Endothelial cell of umbilical vein (primary cell): ENCODE measurements at regions of chr16 and their contacts with region 1.

Region 1: GRCh38 chr16:81696961-81697615 is 82.0 kb upstream of the PLCG2 start:
- DNase-seq: peak; percentile 79
- H3K4me3 ChIP-seq: no peak overlapping the region
- H3K27ac ChIP-seq: peak overlapping the region; percentile 98
- H3K4me1 ChIP-seq: peaks cover 62% of the 10 kb centered on the region
- H3K27me3 ChIP-seq: no peaks in the 10 kb centered on the region
- CTCF ChIP-seq: peak; percentile 79 to 84
- POLR2A ChIP-seq: no peak

Region 2: DNA sequence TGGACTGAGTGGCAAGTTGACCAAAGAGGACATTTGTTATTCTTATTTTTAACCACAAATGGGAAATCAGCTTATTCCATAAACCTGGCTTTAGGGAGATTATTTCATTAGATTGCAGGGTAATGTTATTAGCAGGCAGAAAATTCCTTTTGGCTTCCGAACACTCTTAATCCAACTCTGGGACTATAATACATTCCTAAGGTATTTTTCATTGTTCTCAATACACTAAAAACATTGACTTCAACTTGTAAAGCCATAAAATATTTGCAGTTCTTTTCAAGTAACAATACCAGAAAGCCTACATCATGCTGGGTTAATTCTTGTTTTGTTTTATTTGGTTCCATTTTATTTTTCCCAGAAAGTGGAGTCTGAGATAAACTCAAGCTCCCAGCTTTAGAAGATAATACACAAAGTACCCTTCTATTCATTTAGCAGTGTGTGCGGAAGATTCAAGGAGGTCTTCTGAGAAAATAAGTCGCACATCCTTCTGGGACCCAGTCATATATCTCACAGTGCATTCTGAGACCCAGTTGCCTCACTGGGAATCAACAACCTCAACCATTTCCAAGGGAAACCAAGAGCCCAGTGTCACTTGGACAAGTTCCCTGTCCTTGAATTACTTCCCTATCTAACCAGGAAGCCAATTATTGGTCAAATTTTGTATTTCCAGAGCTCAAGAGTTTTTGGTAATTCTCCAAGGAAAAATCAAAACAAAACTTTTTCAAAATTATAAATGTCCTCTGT is 1545.9 kb before region 1 on chr16:
- CTCF ChIA-PET with region 1: no interaction called
- POLR2A ChIA-PET with region 1: no interaction called
- dilution Hi-C with region 1: no loop called
- intact Hi-C with region 1: no loop called
- DNase-seq: no peak
- H3K4me3 ChIP-seq: no peak overlapping the region
- H3K27ac ChIP-seq: no peak overlapping the region
- H3K4me1 ChIP-seq: no peaks in the 10 kb centered on the region
- H3K27me3 ChIP-seq: no peaks in the 10 kb centered on the region
- CTCF ChIP-seq: no peak
- POLR2A ChIP-seq: no peak

Region 3: DNA sequence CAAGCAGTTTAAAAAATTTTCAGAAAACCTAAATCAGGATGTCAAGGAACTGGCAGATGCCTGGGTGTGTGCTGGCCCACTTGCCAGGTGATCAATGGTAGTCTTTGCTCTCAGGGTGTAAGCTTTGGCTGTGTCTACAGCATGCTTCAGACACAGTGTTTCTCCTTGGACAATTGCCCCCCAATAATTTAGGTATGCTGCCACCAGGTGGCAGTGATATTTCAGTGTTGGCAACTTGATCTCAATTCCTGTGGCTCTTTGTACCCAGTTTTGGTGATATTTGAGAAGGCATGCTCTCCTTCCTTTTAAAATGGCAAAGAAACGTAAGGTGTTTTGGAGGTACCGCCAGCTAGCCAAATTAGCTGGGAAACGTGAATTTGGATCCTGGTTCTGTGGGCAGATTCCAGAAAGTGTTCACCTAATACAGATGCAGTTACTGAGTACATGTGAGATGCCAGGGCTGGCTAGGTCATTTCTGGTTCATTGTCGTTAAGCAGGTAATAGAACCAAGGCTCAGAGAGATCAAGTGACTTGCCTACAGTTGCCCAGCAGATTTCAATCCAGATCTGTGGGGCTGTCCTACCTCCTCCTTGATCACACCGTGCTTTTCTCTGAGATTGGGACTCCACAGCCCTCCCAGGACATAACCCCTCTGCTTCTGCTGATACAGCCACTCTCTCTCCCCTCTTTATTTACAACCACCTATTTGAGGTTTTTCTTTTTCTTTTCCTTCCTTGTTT is 73.6 kb before region 1 on chr16:
- CTCF ChIA-PET with region 1: interaction called, 85 read pairs
- POLR2A ChIA-PET with region 1: interaction called, 5 read pairs
- dilution Hi-C with region 1: no loop called
- intact Hi-C with region 1: loop called (anchors 1 kb)
- DNase-seq: peak; percentile 80
- H3K4me3 ChIP-seq: no peak overlapping the region
- H3K27ac ChIP-seq: no peak overlapping the region
- H3K4me1 ChIP-seq: peaks cover 31% of the 10 kb centered on the region
- H3K27me3 ChIP-seq: no peaks in the 10 kb centered on the region
- CTCF ChIP-seq: peak; percentile 57 to 59
- POLR2A ChIP-seq: no peak

Region 4: DNA sequence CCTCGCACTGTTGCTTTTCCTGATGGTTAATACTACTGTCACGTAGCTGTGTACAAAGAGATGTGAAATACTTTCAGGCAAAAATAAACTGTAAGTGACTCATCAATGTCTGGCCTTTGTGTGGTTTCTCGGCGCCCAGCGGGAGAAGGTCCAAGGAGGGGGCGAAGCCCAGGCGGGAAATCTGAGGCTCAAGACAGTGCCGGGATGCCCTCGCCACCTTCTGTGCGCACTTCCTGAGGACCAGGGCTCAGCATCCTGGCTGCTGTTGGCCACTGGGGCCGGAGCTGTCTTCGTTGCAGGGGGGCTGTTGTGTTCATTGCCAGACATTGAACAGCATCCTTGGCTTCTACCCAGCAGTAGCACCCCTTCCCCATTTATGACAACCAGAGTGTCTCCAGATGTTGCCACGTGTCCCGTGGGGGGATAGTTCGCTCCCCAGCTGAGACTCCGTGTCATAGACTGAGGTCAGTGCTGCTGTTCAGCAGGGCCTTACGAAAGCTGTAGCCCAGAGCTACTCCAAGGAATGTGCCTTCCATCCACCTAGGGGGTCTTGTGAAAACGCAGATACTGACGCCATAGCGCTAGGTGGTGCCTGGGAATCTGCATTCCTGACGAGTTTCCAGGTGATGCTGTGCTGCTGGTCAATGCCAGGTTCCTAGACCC is 14.7 kb after region 1 on chr16:
- CTCF ChIA-PET with region 1: interaction called, 15 read pairs
- POLR2A ChIA-PET with region 1: no interaction called
- dilution Hi-C with region 1: no loop called
- intact Hi-C with region 1: loop called (anchors 1 kb)
- DNase-seq: peak; percentile 91
- H3K4me3 ChIP-seq: no peak overlapping the region
- H3K27ac ChIP-seq: peak overlapping the region; percentile 74
- H3K4me1 ChIP-seq: peaks cover 25% of the 10 kb centered on the region
- H3K27me3 ChIP-seq: no peaks in the 10 kb centered on the region
- CTCF ChIP-seq: no peak
- POLR2A ChIP-seq: peak; percentile 8

Region 5: GRCh38 chr16:81723098-81723723 is 26.1 kb after region 1 on chr16:
- CTCF ChIA-PET with region 1: interaction called, 5 read pairs
- POLR2A ChIA-PET with region 1: no interaction called
- dilution Hi-C with region 1: no loop called
- intact Hi-C with region 1: loop called (anchors 1 kb)
- DNase-seq: peak; percentile 85
- H3K4me3 ChIP-seq: no peak overlapping the region
- H3K27ac ChIP-seq: no peak overlapping the region
- H3K4me1 ChIP-seq: peaks cover 7% of the 10 kb centered on the region
- H3K27me3 ChIP-seq: peaks cover 0 to 3% of the 10 kb centered on the region in 2 experiments
- CTCF ChIP-seq: peak; percentile 47 to 53
- POLR2A ChIP-seq: no peak

Region 6: GRCh38 chr16:81786321-81786720 is 89.2 kb after region 1 on chr16:
- CTCF ChIA-PET with region 1: no interaction called
- POLR2A ChIA-PET with region 1: no interaction called
- dilution Hi-C with region 1: no loop called
- intact Hi-C with region 1: no loop called
- DNase-seq: peak; percentile 36
- H3K4me3 ChIP-seq: no peak overlapping the region
- H3K27ac ChIP-seq: no peak overlapping the region
- H3K4me1 ChIP-seq: no peaks in the 10 kb centered on the region
- H3K27me3 ChIP-seq: no peaks in the 10 kb centered on the region
- CTCF ChIP-seq: no peak
- POLR2A ChIP-seq: no peak